ENCODE measurements at regions of chr12 and their contacts with region 1.

Region 1: DNA sequence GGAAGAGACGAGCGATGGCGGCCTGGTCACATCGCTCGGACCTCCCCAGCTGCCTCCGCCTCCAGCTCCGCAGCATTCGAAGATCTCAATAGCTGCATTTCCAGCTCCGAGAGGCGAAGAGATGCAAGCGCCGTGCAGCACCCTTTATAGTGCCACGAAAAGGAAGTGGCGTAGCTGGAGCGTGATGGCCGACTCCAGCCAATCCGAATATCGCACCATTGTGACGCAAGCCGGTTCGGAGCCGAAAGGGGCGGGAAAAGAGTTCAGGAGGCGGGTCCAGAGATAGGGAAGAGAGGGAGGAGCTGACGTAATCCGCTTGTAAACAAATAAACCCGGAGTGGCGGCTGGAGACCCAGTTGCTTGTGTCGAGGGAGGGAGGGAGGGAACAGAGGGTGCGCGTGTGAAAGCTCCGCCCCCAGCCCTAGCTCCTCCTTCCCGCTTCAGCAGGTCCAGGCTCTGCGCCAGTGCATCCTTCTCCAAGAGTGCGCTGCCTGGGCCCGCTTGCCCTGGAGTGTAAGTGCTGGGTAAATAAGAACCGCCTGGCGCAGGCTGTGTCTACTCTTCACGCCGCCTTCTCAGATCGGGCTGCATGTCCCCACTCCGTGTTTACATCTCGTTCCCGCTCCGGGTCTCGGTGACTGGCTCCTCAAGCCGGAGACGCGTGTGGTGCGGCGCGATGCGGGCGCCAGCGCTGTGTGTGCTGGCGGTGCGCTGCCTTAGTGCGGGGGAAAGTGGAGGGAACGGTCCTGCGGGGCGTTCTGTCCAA is at the start of gene BTG1:
- DNase-seq: peak; percentile 100
- H3K4me3 Mint-ChIP-seq: peak within 1 kb of the TSS; percentile 100
- H3K27ac Mint-ChIP-seq: peak within 1 kb of the TSS; percentile 91
- H3K4me1 Mint-ChIP-seq: peaks cover 20% of the 10 kb centered on the region
- H3K27me3 Mint-ChIP-seq: peaks cover 2% of the 10 kb centered on the region
- total RNA-seq, gene BTG1: 137 to 144 TPM

Region 2: GRCh38 chr12:91811481-91812287 is 334.2 kb before region 1 on chr12:
- CTCF ChIA-PET with region 1: interaction called, 31 read pairs
- POLR2A ChIA-PET with region 1: interaction called, 9 read pairs
- intact Hi-C with region 1: no loop called
- DNase-seq: peak; percentile 80
- H3K4me3 Mint-ChIP-seq: no peak overlapping the region
- H3K27ac Mint-ChIP-seq: no peak overlapping the region
- H3K4me1 Mint-ChIP-seq: peaks cover 20% of the 10 kb centered on the region
- H3K27me3 Mint-ChIP-seq: no peaks in the 10 kb centered on the region

Region 3: DNA sequence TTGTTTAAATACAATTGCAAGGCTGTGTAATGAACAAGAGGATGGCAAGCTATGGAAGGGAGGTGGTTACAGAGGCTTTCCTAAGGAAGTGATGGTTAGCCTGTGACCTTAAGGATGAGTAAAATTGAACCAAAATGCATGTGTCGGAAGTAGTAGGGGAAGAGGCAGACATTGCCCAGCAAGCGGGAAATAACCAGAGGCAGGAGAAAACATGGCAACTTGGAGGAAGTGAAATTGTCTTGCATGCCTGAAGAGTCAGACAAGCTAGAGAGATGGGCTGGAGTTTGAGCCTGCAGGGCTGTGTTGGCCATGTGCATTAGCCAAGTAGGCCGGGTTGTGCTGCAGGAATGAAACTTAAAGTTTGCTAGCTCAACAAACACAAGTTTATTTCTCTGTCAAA is 96.5 kb before region 1 on chr12:
- CTCF ChIA-PET with region 1: interaction called, 3 read pairs
- POLR2A ChIA-PET with region 1: interaction called, 15 read pairs
- intact Hi-C with region 1: no loop called
- DNase-seq: no peak
- H3K4me3 Mint-ChIP-seq: no peak overlapping the region
- H3K27ac Mint-ChIP-seq: no peak overlapping the region
- H3K4me1 Mint-ChIP-seq: peaks cover 70% of the 10 kb centered on the region
- H3K27me3 Mint-ChIP-seq: no peaks in the 10 kb centered on the region

Region 4: DNA sequence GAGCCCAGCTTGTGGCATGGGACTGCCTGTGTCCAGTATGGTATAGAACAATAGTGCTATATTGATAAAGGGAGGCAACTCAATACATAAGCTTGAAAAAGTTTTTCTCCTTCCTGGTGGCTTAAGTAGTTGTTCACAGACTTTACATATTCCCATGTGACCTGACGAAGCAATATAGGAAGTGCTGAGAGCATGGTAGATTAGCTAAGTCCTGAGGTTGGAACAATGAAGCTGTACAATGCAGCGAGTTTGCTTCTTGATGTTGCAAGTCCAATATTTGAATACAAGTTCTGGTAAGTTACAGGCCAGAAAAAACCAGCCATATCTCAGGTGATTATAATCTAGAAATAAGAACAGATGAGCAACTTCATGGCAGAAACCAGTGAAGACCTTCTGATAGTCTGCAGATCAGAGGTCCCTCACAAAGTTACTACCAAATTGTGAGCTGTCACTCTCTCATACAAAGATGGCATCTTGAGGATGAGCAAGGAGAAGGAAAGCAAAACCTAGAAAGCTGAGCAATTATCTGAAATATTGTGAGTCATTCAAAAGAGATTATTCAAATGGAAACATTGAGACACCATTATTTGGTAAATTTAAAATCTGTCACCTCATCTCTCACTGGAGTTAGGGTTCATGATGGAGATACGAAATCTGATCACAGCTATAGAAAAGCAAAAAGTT is 72.6 kb after region 1 on chr12:
- CTCF ChIA-PET with region 1: interaction called, 4 read pairs
- POLR2A ChIA-PET with region 1: interaction called, 75 read pairs
- intact Hi-C with region 1: loop called (anchors 2 kb)
- DNase-seq: no peak
- H3K4me3 Mint-ChIP-seq: no peak overlapping the region
- H3K27ac Mint-ChIP-seq: peak overlapping the region; percentile 74
- H3K4me1 Mint-ChIP-seq: peaks cover 23% of the 10 kb centered on the region
- H3K27me3 Mint-ChIP-seq: no peaks in the 10 kb centered on the region

Region 5: GRCh38 chr12:92229381-92229780 is 83.5 kb after region 1 on chr12:
- CTCF ChIA-PET with region 1: no interaction called
- POLR2A ChIA-PET with region 1: no interaction called
- intact Hi-C with region 1: no loop called
- DNase-seq: no peak
- H3K4me3 Mint-ChIP-seq: no peak overlapping the region
- H3K27ac Mint-ChIP-seq: no peak overlapping the region
- H3K4me1 Mint-ChIP-seq: peaks cover 4% of the 10 kb centered on the region
- H3K27me3 Mint-ChIP-seq: no peaks in the 10 kb centered on the region

Region 6: DNA sequence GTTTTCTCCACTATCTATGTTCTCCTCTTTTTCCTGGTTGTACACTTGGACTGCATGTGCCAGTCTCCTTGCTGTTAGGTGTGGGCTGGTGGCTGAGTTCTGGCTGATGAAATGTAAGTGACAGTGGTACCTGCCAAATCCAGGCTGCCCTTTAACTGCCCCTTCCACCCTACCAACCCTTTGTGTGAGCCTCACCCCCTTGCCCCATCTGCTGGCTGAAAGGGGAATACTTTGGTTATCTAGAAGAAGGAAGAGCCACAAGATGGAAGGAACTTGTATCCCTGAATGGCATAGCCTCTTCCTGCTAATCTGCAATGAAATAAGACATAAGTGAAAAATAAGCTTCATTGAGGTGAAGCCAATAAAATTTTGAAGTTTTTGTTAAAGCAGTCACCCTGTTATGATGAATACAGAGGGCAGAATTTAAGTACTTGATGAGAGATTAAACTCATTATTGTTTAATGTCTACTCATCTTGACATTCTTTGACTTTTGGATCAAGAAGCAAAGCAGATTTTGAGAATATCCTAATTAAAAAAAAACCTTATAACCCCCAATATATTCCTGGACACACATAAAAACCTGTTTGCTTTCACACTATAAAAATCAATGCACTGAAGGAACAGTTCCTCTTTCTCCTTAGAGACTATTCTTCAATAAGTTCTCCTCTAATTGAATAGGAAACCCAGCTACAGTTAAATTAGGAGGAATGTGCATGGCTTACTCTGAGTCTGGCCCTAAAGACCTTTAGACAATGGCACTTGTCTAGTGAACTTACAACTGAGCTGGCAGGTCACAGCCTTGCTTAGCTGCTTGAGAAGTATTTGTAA is 262.4 kb after region 1 on chr12:
- CTCF ChIA-PET with region 1: interaction called, 30 read pairs
- POLR2A ChIA-PET with region 1: interaction called, 75 read pairs
- intact Hi-C with region 1: loop called (anchors 2 kb)
- DNase-seq: peak; percentile 77
- H3K4me3 Mint-ChIP-seq: no peak overlapping the region
- H3K27ac Mint-ChIP-seq: peak overlapping the region; percentile 33
- H3K4me1 Mint-ChIP-seq: peaks cover 48% of the 10 kb centered on the region
- H3K27me3 Mint-ChIP-seq: no peaks in the 10 kb centered on the region

Region 7: GRCh38 chr12:92570056-92570753 is 424.3 kb after region 1 on chr12:
- CTCF ChIA-PET with region 1: interaction called, 6 read pairs
- POLR2A ChIA-PET with region 1: interaction called, 14 read pairs
- intact Hi-C with region 1: loop called (anchors 1 kb)
- DNase-seq: peak; percentile 25
- H3K4me3 Mint-ChIP-seq: no peak overlapping the region
- H3K27ac Mint-ChIP-seq: no peak overlapping the region
- H3K4me1 Mint-ChIP-seq: peaks cover 24% of the 10 kb centered on the region
- H3K27me3 Mint-ChIP-seq: no peaks in the 10 kb centered on the region

Measured in activated CD4-positive, alpha-beta memory T cell treated with anti-CD3 and anti-CD28 coated beads for 36 hours (primary cell).